CD8-positive, alpha-beta T cell (primary cell): ENCODE measurements at regions of chr9 and their contacts with region 1.

Region 1: DNA sequence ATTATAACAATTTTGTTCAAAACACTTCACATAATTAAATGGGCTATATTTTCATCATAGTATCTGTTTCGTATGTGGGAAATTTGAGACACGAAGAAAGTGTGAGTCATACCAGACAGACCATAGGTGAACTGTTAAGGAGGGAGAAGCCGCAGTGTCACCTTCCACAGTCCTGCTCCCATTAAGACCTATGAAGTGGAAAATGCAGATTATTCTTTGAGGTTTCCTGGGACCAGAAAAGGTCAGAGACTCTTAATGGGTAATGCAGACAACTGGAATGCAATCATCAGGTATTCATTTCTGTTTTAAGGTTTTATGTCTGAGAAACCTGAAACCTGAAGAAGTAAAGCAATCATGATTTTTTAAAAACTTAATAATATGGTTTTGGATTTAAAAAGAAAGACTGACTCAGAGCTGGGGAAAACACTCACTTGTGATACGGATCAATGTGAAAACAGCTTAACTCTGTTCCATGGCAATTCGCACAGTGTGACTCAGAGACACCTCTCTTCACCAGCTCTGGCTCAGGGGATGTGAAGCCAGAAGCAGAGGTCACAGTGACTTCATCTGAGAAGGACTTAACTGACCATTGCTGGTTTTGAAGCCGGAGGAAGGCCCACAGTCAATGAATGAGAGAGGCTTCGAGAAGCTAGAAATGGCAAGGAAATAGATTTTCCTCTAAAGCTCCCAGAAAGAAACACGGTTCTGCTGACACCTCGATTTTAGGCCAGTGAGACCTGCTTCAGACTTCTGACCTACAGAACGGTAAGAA is 17.2 kb upstream of the GCNT1 start:
- DNase-seq: no peak
- ATAC-seq: no peak
- H3K4me3 ChIP-seq: no peak overlapping the region
- H3K4me3 Mint-ChIP-seq: no peak overlapping the region
- H3K27ac ChIP-seq: no peak overlapping the region
- H3K27ac Mint-ChIP-seq: no peak overlapping the region
- H3K4me1 ChIP-seq: no peaks in the 10 kb centered on the region
- H3K4me1 Mint-ChIP-seq: peaks cover 2% of the 10 kb centered on the region
- H3K27me3 ChIP-seq: no peaks in the 10 kb centered on the region
- H3K27me3 Mint-ChIP-seq: no peaks in the 10 kb centered on the region
- CTCF ChIP-seq: no peak

Region 2: GRCh38 chr9:76478226-76478625 is 36.5 kb after region 1 on chr9:
- CTCF ChIA-PET with region 1: no interaction called
- POLR2A ChIA-PET with region 1: no interaction called
- intact Hi-C with region 1: no loop called
- DNase-seq: no peak
- ATAC-seq: no peak
- H3K4me3 ChIP-seq: no peak overlapping the region
- H3K4me3 Mint-ChIP-seq: no peak overlapping the region
- H3K27ac ChIP-seq: no peak overlapping the region
- H3K27ac Mint-ChIP-seq: no peak overlapping the region
- H3K4me1 ChIP-seq: no peaks in the 10 kb centered on the region
- H3K4me1 Mint-ChIP-seq: no peaks in the 10 kb centered on the region
- H3K27me3 ChIP-seq: no peaks in the 10 kb centered on the region
- H3K27me3 Mint-ChIP-seq: no peaks in the 10 kb centered on the region
- CTCF ChIP-seq: no peak

Region 3: GRCh38 chr9:76846297-76846696 is 404.6 kb after region 1 on chr9:
- CTCF ChIA-PET with region 1: no interaction called
- POLR2A ChIA-PET with region 1: no interaction called
- intact Hi-C with region 1: no loop called
- DNase-seq: no peak
- ATAC-seq: no peak
- H3K4me3 ChIP-seq: no peak overlapping the region
- H3K4me3 Mint-ChIP-seq: no peak overlapping the region
- H3K27ac ChIP-seq: no peak overlapping the region
- H3K27ac Mint-ChIP-seq: no peak overlapping the region
- H3K4me1 ChIP-seq: no peaks in the 10 kb centered on the region
- H3K4me1 Mint-ChIP-seq: no peaks in the 10 kb centered on the region
- H3K27me3 ChIP-seq: no peaks in the 10 kb centered on the region
- H3K27me3 Mint-ChIP-seq: peaks cover 6% of the 10 kb centered on the region
- CTCF ChIP-seq: no peak

Region 4: GRCh38 chr9:77011973-77012821 is 570.5 kb after region 1 on chr9:
- CTCF ChIA-PET with region 1: no interaction called
- POLR2A ChIA-PET with region 1: no interaction called
- intact Hi-C with region 1: loop called (anchors 5 kb)
- DNase-seq: peak; percentile 8 to 60 (median 49)
- ATAC-seq: no peak
- H3K4me3 ChIP-seq: no peak overlapping the region
- H3K4me3 Mint-ChIP-seq: no peak overlapping the region
- H3K27ac ChIP-seq: no peak overlapping the region
- H3K27ac Mint-ChIP-seq: no peak overlapping the region
- H3K4me1 ChIP-seq: peaks cover 6% of the 10 kb centered on the region
- H3K4me1 Mint-ChIP-seq: peaks cover 12% of the 10 kb centered on the region
- H3K27me3 ChIP-seq: peaks cover 9 to 14% of the 10 kb centered on the region in 2 experiments
- H3K27me3 Mint-ChIP-seq: peaks cover 67% of the 10 kb centered on the region
- CTCF ChIP-seq: peak; percentile 55

Region 5: DNA sequence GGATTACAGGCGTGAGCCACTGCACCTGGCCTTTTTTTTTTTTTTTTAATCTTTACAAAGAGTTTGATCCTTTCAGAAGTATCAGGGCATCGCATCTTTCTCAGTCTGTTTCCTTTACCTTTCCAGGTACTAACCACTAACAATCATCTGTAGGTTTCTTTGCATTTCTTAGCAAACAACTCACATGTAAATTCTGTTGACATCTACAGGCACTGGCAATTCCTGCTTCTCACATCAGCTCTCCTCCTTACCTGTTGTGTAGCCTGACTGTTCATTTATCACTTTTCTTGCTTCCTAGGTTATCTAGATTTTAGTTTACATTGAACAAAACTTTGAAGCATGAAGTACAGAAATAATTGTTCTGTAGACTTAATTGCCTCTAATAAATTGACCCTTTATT is 708.1 kb after region 1 on chr9:
- CTCF ChIA-PET with region 1: interaction called, 3 read pairs
- POLR2A ChIA-PET with region 1: no interaction called
- intact Hi-C with region 1: loop called in 1 of 2 experiments (anchors 2 kb)
- DNase-seq: no peak
- ATAC-seq: no peak
- H3K4me3 ChIP-seq: no peak overlapping the region
- H3K4me3 Mint-ChIP-seq: no peak overlapping the region
- H3K27ac ChIP-seq: no peak overlapping the region
- H3K27ac Mint-ChIP-seq: no peak overlapping the region
- H3K4me1 ChIP-seq: no peaks in the 10 kb centered on the region
- H3K4me1 Mint-ChIP-seq: no peaks in the 10 kb centered on the region
- H3K27me3 ChIP-seq: peaks cover 0 to 2% of the 10 kb centered on the region in 2 experiments
- H3K27me3 Mint-ChIP-seq: peaks cover 20% of the 10 kb centered on the region
- CTCF ChIP-seq: no peak